Left cardiac atrium (tissue), 4 donors: ENCODE measurements at regions of chr9 and their contacts with region 1.

Region 1: DNA sequence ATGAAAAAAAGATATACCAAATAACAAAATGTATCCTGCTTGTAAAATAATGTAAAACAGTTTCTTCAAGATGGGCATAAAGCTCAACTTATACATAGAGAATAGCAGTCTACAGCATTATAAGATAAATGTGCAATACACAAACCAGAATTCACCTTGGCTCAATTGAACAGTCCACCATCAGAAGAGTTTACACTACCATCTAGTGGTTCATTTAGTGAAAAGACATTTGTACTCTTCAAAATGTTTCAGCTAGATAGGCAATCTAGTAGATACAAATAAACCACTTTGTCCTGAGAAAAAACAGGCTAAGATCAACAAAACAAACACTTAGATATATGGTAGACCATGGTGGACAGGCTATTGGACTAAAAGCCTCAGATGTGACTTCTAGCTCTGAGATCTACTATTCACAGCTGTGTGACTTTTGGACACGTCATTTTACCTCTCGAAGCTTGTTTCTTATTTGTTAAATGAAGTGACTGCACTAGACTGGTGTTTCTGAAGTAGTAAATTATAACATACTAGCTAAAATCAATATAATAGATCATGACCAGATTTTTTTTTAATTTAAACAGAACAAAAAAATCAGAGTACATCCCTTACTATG is 22.1 kb upstream of the TPD52L3 start:
- DNase-seq: no peak
- ATAC-seq: peak; percentile 55 to 56

Region 2: GRCh38 chr9:5879419-5880181 is 426.5 kb before region 1 on chr9:
- intact Hi-C with region 1: loop called (anchors 5 to 10 kb)
- DNase-seq: no peak
- ATAC-seq: peak in 1 of 2 donors; percentile 89

Region 3: DNA sequence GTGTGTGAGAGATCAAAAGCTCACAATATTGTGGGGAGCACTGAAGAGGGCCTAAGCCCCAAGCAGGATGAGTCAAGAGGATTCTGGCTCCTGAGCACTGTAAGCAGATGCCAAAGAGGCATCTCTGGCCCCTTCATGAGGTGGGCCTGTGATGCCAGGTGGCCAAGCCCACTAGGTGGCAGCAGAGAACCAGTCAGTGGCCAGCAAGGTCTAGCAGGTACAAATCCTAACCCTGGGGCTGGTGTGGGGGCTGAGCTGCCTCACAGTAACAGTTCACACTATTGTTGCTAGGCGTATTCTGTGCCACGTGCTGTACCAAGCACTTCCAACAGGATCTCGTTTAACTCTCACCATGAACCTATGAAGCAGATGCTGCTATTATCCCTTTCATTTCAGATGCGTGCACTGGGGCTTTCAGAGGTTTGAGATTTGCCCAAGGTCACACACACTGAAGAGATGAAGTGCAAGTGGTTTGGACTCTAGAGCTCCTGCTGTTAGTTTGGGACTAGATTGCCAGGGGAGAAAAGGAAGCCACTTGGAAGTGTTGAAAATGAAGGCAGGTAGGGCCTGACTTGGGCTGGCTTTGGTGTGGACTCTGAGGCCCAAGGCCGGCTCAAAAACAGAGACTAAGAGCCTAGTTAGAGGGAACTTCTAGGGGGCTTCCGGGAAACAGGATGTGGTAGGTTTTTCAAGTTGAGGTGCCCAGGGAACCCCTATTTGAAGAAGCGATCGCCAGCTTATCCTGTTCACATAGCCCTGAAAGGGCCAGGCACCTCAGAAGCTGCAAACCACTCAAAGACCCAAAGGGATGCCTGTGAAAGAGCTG is 419.7 kb before region 1 on chr9:
- intact Hi-C with region 1: loop called (anchors 5 to 10 kb)
- DNase-seq: peak; percentile 77
- ATAC-seq: peak; percentile 86 to 93

Region 4: GRCh38 chr9:6055213-6055612 is 250.8 kb before region 1 on chr9:
- intact Hi-C with region 1: loop called (anchors 1 to 2 kb)
- DNase-seq: no peak
- ATAC-seq: peak; percentile 70 to 91

Region 5: DNA sequence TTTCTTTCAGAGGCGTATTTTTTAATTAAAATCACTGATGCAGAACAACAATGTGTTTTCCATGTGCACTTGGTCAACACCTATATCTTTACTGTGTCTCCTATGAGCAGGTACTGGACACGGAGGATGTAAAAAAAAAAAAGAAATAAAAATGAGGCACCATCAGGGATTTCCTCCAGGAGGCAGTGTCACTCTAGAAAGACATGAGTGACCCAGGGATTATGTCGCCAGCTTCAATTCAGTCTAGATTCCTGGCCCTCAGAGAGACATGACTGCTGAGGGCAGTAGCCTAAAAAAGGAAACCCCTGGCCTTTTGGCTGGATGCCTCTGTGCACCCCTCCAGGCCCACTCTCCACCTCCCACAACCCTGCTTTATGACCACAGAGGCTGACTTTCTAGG is 108.7 kb before region 1 on chr9:
- intact Hi-C with region 1: loop called in 1 of 2 experiments (anchors 5 kb)
- DNase-seq: no peak
- ATAC-seq: peak; percentile 44 to 67